ENCODE measurements at regions of chr10 and their contacts with region 1.

Region 1: DNA sequence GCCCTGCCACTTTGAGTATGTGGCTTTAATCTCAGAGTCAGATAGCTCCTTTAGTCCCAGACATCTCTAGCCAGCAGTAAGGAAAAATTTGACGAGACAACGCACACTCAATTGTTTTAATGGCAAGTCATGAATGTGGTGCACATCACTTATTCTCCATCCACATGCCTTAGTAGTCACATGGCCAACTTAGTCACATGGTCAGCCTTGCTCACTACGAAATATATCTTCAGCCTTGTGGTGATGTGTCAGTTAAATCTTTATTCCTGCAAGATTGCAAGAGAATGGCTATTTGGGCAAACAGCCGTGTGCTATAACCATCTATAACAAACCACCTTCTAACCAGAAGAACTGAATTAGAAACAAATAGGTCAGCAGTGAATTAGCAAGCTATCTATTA is 871.1 kb upstream of the CELF2 start:
- DNase-seq: no peak
- H3K4me3 Mint-ChIP-seq: no peak overlapping the region
- H3K27ac Mint-ChIP-seq: no peak overlapping the region
- H3K4me1 Mint-ChIP-seq: no peaks in the 10 kb centered on the region
- H3K27me3 Mint-ChIP-seq: peaks cover 7% of the 10 kb centered on the region

Region 2: DNA sequence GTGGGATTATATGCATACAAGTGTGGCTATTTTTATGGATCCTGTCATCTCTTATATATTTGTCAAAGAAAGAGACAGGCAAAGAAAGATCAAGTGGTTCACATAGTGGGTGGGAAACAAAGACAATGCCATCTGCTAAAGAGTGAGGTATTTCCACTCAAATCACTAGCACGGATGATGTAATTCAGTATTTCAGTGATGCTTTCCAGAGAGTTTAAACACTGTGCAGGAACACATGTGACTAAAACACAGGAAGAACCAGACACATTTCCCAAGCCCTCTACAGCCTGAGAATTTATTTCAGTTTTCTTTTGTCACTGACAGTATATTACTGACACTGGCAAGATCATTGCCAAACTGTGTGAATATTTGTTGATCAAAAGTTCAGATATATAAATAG is 14.6 kb before region 1 on chr10:
- CTCF ChIA-PET with region 1: no interaction called
- intact Hi-C with region 1: loop called (anchors 1 kb)
- DNase-seq: no peak
- H3K4me3 Mint-ChIP-seq: no peak overlapping the region
- H3K27ac Mint-ChIP-seq: no peak overlapping the region
- H3K4me1 Mint-ChIP-seq: no peaks in the 10 kb centered on the region
- H3K27me3 Mint-ChIP-seq: peaks cover 3% of the 10 kb centered on the region